Activated CD4-positive, alpha-beta T cell treated with anti-CD3 and anti-CD28 coated beads, Interleukin-2, amount 10 ng/mL, durations not matched to agents 24 days and 14 days (primary cell): ENCODE measurements at regions of chr21 and their contacts with region 1.

Region 1: GRCh38 chr21:36989699-36990507 is 16.6 kb upstream of the RIPPLY3 start:
- DNase-seq: peak; percentile 97
- H3K4me3 Mint-ChIP-seq: peak overlapping the region; percentile 83
- H3K27ac Mint-ChIP-seq: peak overlapping the region; percentile 94
- H3K4me1 Mint-ChIP-seq: peaks cover 33% of the 10 kb centered on the region
- H3K27me3 Mint-ChIP-seq: peaks cover 2% of the 10 kb centered on the region

Region 2: GRCh38 chr21:36934864-36935420 is 55.0 kb before region 1 on chr21:
- intact Hi-C with region 1: loop called (anchors 2 kb)
- DNase-seq: no peak
- H3K4me3 Mint-ChIP-seq: no peak overlapping the region
- H3K27ac Mint-ChIP-seq: no peak overlapping the region
- H3K4me1 Mint-ChIP-seq: no peaks in the 10 kb centered on the region
- H3K27me3 Mint-ChIP-seq: no peaks in the 10 kb centered on the region

Region 3: GRCh38 chr21:36966066-36966820 is 23.7 kb before region 1 on chr21 and contains the start of gene HLCS:
- intact Hi-C with region 1: loop called (anchors 1 kb)
- DNase-seq: peak; percentile 92
- H3K4me3 Mint-ChIP-seq: peak within 1 kb of the TSS; percentile 86
- H3K27ac Mint-ChIP-seq: peak within 1 kb of the TSS; percentile 91
- H3K4me1 Mint-ChIP-seq: peaks cover 14% of the 10 kb centered on the region
- H3K27me3 Mint-ChIP-seq: no peaks in the 10 kb centered on the region
- total RNA-seq, gene HLCS: 15.3 and 16.5 TPM in 2 replicates

Region 4: GRCh38 chr21:37009740-37010341 is 19.9 kb after region 1 on chr21:
- intact Hi-C with region 1: loop called (anchors 2 kb)
- DNase-seq: peak; percentile 94
- H3K4me3 Mint-ChIP-seq: peak overlapping the region; percentile 74
- H3K27ac Mint-ChIP-seq: no peak overlapping the region
- H3K4me1 Mint-ChIP-seq: peaks cover 6% of the 10 kb centered on the region
- H3K27me3 Mint-ChIP-seq: peaks cover 34% of the 10 kb centered on the region

Region 5: GRCh38 chr21:37072988-37073416 is 83.1 kb after region 1 on chr21 and contains the starts of genes PIGP and TTC3:
- intact Hi-C with region 1: loop called (anchors 1 kb)
- DNase-seq: peak; percentile 99
- H3K4me3 Mint-ChIP-seq: peak within 1 kb of the TSS; percentile 94
- H3K27ac Mint-ChIP-seq: peak within 1 kb of the TSS; percentile 96
- H3K4me1 Mint-ChIP-seq: peaks cover 33% of the 10 kb centered on the region
- H3K27me3 Mint-ChIP-seq: peaks cover 5% of the 10 kb centered on the region
- total RNA-seq, gene PIGP: 19.0 and 19.4 TPM in 2 replicates
- total RNA-seq, gene TTC3: 62.4 and 63.0 TPM in 2 replicates

Region 6: GRCh38 chr21:37267269-37268184 is 277.6 kb after region 1 on chr21 and contains the start of gene VPS26C:
- intact Hi-C with region 1: loop called (anchors 5 kb)
- DNase-seq: peak; percentile 100
- H3K4me3 Mint-ChIP-seq: peak within 1 kb of the TSS; percentile 97
- H3K27ac Mint-ChIP-seq: peak within 1 kb of the TSS; percentile 98
- H3K4me1 Mint-ChIP-seq: peaks cover 34% of the 10 kb centered on the region
- H3K27me3 Mint-ChIP-seq: peaks cover 2% of the 10 kb centered on the region
- total RNA-seq, gene VPS26C: 52.8 and 60.0 TPM in 2 replicates

Region 7: GRCh38 chr21:37563641-37564340 is 573.9 kb after region 1 on chr21:
- intact Hi-C with region 1: loop called (anchors 5 kb)
- DNase-seq: peak; percentile 98
- H3K4me3 Mint-ChIP-seq: peak overlapping the region; percentile 94
- H3K27ac Mint-ChIP-seq: peak overlapping the region; percentile 100
- H3K4me1 Mint-ChIP-seq: peaks cover 23% of the 10 kb centered on the region
- H3K27me3 Mint-ChIP-seq: peaks cover 9% of the 10 kb centered on the region